Naive thymus-derived CD4-positive, alpha-beta T cell (primary cell): ENCODE measurements at regions of chr10 and their contacts with region 1.

Region 1: DNA sequence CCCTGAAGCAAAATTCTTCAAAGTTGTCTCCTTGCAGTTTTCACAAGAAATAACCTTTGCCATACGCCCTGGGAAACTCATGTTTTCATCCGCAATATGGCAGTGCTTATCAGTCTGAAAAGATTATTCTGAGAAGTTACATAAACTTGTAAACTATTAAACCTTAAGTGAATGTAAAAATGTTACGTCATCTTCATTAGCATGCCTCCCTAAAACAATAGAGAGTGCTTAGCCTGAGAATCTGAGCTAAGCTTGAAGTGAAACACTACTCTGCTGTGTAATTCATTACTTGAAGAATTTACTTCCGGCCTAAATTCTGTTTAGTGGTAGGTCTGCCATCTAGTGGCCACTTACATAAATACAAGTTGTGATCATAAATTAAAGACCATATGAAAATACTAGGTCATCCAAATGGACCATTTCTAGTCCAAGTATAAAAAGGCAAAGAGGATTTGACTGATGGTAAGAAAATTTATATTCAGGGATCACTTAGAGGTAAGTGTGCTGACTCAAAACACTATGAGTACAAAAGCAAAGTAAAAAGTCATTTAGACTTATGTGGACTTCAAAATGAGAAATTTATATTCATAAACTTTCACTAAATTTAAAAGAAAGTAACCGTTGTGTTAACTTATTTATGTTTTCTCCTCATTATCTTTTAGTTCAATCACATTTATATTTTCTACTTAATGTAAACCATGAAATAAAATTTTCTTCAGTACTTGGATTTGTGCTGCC is 745.1 kb upstream of the LRRTM3 start:
- DNase-seq: peak in 7 of 9 donors; percentile 1 to 46 (median 34)
- ATAC-seq: peak; percentile 78
- H3K4me3 ChIP-seq: no peak overlapping the region
- H3K4me3 Mint-ChIP-seq: no peak overlapping the region
- H3K27ac ChIP-seq: no peak overlapping the region
- H3K27ac Mint-ChIP-seq: no peak overlapping the region
- H3K4me1 ChIP-seq: no peaks in the 10 kb centered on the region
- H3K4me1 Mint-ChIP-seq: peaks cover 0 to 6% (median 0%) of the 10 kb centered on the region in 7 donors
- H3K27me3 ChIP-seq: no peaks in the 10 kb centered on the region
- H3K27me3 Mint-ChIP-seq: no peaks in the 10 kb centered on the region

Region 2: GRCh38 chr10:66931340-66931948 is 750.7 kb after region 1 on chr10:
- CTCF ChIA-PET with region 1: no interaction called
- POLR2A ChIA-PET with region 1: no interaction called
- intact Hi-C with region 1: loop called in 1 of 2 experiments (anchors 1 kb)
- DNase-seq: no peak
- ATAC-seq: no peak
- H3K4me3 ChIP-seq: no peak overlapping the region
- H3K4me3 Mint-ChIP-seq: no peak overlapping the region
- H3K27ac ChIP-seq: no peak overlapping the region
- H3K27ac Mint-ChIP-seq: no peak overlapping the region
- H3K4me1 ChIP-seq: no peaks in the 10 kb centered on the region
- H3K4me1 Mint-ChIP-seq: peaks cover 0 to 8% (median 0%) of the 10 kb centered on the region in 7 donors
- H3K27me3 ChIP-seq: no peaks in the 10 kb centered on the region
- H3K27me3 Mint-ChIP-seq: peaks cover 22 to 47% (median 36%) of the 10 kb centered on the region in 5 donors

Region 3: DNA sequence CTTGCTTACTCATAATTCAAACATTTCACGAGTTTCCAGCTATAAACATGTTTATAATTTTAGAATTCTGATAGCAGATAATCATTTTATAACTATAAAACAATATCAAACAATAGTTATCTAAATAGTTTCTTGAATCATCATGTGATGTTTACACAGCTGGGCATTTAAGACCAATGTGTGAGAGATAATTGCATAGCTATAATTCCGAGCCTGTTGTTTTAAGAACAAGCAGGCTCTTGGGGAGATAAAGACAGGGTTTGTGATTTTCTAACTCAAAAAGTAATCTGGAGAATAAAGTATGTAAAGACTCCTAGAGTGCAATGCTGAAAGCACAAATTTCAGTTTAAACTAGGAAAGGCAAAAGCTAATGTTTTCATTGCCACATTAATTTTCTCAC is 1076.3 kb after region 1 on chr10:
- CTCF ChIA-PET with region 1: interaction called, 10 read pairs
- POLR2A ChIA-PET with region 1: no interaction called
- intact Hi-C with region 1: no loop called
- DNase-seq: no peak
- ATAC-seq: no peak
- H3K4me3 ChIP-seq: no peak overlapping the region
- H3K4me3 Mint-ChIP-seq: no peak overlapping the region
- H3K27ac ChIP-seq: no peak overlapping the region
- H3K27ac Mint-ChIP-seq: no peak overlapping the region
- H3K4me1 ChIP-seq: no peaks in the 10 kb centered on the region
- H3K4me1 Mint-ChIP-seq: no peaks in the 10 kb centered on the region
- H3K27me3 ChIP-seq: no peaks in the 10 kb centered on the region
- H3K27me3 Mint-ChIP-seq: peaks cover 0 to 4% (median 0%) of the 10 kb centered on the region in 5 donors

Region 4: DNA sequence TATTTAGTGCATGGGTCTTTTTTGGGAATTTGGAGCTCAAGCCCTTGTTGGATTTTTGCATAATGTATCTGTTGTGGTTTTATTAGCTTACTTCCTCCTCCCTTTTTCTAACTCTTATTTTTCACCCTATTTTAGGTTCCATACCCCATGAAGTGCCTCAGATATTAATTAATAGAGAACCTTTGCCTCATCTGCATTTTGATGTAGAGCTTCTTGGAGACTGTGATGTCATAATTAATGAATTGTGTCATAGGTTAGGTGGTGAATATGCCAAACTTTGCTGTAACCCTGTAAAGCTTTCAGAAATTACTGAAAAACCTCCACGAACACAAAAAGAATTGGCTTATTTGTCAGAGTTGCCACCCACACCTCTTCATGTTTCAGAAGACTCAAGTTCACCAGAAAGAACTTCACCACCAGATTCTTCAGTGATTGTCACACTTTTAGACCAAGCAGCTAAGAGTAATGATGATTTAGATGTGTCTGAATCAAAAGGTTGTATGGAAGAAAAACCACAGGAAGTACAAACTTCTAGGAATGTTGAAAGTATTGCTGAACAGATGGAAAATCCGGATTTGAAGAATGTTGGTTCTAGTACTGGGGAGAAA is 1731.7 kb after region 1 on chr10:
- CTCF ChIA-PET with region 1: no interaction called
- POLR2A ChIA-PET with region 1: no interaction called
- intact Hi-C with region 1: loop called in 1 of 2 experiments (anchors 10 kb)
- DNase-seq: no peak
- ATAC-seq: no peak
- H3K4me3 ChIP-seq: no peak overlapping the region
- H3K4me3 Mint-ChIP-seq: no peak overlapping the region
- H3K27ac ChIP-seq: no peak overlapping the region
- H3K27ac Mint-ChIP-seq: peak overlapping the region; percentile 6 to 69 (median 36)
- H3K4me1 ChIP-seq: no peaks in the 10 kb centered on the region
- H3K4me1 Mint-ChIP-seq: peaks cover 14 to 47% (median 27%) of the 10 kb centered on the region in 7 donors
- H3K27me3 ChIP-seq: no peaks in the 10 kb centered on the region
- H3K27me3 Mint-ChIP-seq: no peaks in the 10 kb centered on the region